HepG2 (cell line): ENCODE measurements at regions of chr3 and their contacts with region 1.

Region 1: DNA sequence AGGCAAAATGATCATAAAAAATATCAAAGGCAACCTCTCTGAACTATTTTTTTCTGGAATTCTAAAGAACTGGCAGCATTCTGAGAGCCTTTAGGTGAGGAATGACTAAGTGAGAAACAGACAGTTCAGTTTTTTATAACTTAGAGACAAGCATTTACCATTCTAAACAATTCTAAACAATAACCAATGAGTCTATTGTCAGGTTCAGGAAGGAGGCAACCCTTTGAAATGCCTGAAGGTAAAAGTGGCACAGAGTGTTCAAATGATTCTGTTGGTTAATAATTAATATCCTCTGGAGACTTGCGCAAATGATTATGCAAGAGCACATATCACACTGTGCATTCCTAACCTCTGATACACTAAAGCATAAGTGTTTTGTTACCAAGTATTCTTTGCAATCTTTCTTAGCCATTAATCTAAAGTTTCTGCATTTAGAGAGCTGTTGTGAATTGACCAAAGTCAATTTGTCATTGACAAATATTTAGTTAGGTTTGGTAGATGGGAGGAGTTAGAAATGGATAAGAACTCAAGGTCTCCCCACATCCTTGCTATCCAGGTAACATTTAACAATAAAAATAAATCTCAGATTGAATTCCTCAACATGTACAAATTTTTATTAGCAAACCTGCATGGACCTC is 9.2 kb upstream of the TGFBR2 start:
- DNase-seq: peak; percentile 99
- ATAC-seq: peak; percentile 97
- H3K4me3 ChIP-seq: no peak overlapping the region; a peak in 1 of 6 replicates
- H3K27ac ChIP-seq: peak overlapping the region; percentile 98
- H3K4me1 ChIP-seq: peaks cover 74% of the 10 kb centered on the region
- H3K27me3 ChIP-seq: no peaks in the 10 kb centered on the region
- CTCF ChIP-seq: no peak
- EP300 ChIP-seq: peak; percentile 94 to 100
- POLR2A ChIP-seq: no peak
- RAD21 ChIP-seq: no peak

Region 2: GRCh38 chr3:30384546-30385072 is 212.6 kb before region 1 on chr3:
- CTCF ChIA-PET with region 1: no interaction called
- POLR2A ChIA-PET with region 1: no interaction called
- in situ Hi-C with region 1: no loop called
- intact Hi-C with region 1: no loop called
- DNase-seq: no peak
- ATAC-seq: no peak
- H3K4me3 ChIP-seq: no peak overlapping the region
- H3K27ac ChIP-seq: no peak overlapping the region
- H3K4me1 ChIP-seq: peaks cover 11% of the 10 kb centered on the region; the same call in 1 of the 2 replicates
- H3K27me3 ChIP-seq: no peaks in the 10 kb centered on the region
- CTCF ChIP-seq: no peak
- EP300 ChIP-seq: no peak
- POLR2A ChIP-seq: no peak
- RAD21 ChIP-seq: no peak

Region 3: GRCh38 chr3:30578479-30578878 is 18.8 kb before region 1 on chr3:
- CTCF ChIA-PET with region 1: no interaction called
- POLR2A ChIA-PET with region 1: interaction called, 16 read pairs
- in situ Hi-C with region 1: no loop called
- intact Hi-C with region 1: no loop called
- DNase-seq: peak; percentile 61
- ATAC-seq: peak; percentile 61
- H3K4me3 ChIP-seq: no peak overlapping the region
- H3K27ac ChIP-seq: peak overlapping the region; percentile 23
- H3K4me1 ChIP-seq: peaks cover 50% of the 10 kb centered on the region
- H3K27me3 ChIP-seq: no peaks in the 10 kb centered on the region
- CTCF ChIP-seq: no peak
- EP300 ChIP-seq: peak in 1 of 2 experiments; percentile 29; a peak in 1 of 4 replicates
- POLR2A ChIP-seq: no peak
- RAD21 ChIP-seq: no peak

Region 4: DNA sequence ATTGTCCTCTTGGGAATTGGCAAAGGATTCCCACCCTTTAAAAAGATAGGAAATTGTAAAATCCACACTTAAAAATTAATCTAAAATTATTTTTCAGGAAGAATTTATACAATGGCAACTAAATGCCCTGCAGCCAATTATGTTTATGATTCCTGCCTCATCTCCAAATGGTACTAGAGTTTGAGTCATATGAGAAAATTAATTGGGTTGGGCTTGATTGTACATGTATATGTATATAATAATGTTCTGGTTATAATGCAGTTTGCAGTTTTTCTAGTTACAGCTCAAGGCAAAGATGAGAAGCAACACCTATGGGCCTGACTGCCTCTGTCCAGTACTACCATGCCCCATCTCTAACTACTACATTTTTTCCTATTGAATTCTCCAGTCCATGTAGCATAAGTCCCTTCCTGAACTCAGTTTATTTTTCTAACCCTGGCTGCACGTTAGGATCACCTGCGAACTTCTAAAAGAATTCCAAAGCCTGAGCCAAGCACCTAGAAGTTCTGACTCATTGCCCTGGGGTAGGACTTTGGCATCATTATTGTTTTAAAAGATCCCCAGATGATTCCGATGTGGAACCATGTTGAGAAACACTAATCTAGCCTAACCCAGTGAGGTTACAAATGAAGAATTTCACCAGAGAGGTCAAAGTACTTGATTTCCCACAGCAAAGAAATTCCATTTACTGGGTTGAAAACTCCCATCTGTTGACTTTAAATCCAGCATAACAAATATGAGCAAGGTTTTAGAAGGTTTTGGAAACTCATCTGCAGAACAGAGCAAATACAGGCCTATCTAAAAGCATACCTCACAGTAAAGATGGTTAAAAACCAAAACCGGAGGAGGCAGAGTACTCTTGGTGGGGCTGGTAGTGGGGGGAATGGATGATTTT is 28.5 kb after region 1 on chr3:
- CTCF ChIA-PET with region 1: no interaction called
- POLR2A ChIA-PET with region 1: no interaction called
- in situ Hi-C with region 1: no loop called
- intact Hi-C with region 1: loop called (anchors 1 kb)
- DNase-seq: peak; percentile 98
- ATAC-seq: peak; percentile 90
- H3K4me3 ChIP-seq: peak overlapping the region in 1 of 3 experiments; percentile 32; a peak in 1 of 6 replicates
- H3K27ac ChIP-seq: peak overlapping the region; percentile 79
- H3K4me1 ChIP-seq: peaks cover 100% of the 10 kb centered on the region
- H3K27me3 ChIP-seq: no peaks in the 10 kb centered on the region
- CTCF ChIP-seq: no peak
- EP300 ChIP-seq: peak in 1 of 2 experiments; percentile 91; a peak in 2 of 4 replicates
- POLR2A ChIP-seq: no peak; a peak in 1 of 4 replicates
- RAD21 ChIP-seq: no peak